AG04450 (cell line): ENCODE measurements at regions of chr2 and their contacts with region 1.

Region 1: GRCh38 chr2:24334245-24334633 is 26.1 kb downstream of the ITSN2 start:
- DNase-seq: no peak
- H3K4me3 ChIP-seq: no peak overlapping the region
- H3K27ac ChIP-seq: no peak overlapping the region
- H3K27me3 ChIP-seq: no peaks in the 10 kb centered on the region
- CTCF ChIP-seq: no peak

Region 2: DNA sequence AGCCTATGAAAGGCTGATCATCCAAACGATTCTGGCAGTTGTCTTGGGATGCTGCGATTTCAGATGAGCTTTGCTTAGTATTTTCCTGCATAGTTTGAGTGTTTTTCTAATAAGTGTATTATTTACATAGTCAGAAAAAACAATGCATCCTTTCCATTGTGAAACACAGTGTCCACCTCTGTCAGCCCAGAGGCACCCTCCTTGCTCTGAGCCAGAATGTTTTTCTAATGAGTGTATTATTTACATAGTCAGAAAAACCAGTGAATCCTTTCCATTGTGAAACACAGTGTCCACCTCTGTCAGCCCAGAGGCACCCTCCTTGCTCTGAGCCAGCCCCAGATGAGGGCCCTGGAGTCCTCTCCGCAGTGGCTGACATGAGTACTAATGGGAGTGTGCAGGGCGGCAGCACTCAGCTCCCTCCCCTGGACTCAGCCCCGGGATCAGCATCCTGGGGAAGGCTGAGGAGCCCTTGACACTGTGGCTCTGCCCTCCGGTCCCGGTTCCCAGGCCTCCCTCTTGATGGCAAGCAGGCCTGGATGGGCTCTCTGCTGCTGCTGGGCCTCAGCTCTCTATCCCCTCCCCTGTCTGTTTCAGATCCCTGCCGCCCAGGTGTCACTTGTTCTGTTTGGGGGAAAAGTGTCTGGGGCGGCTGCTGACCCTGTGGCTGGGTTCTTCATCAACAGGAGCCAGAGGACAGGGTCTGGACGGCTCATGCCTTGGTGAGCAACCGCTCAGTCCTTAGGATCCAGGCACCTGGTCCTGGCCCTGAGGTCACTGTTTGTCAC is 318.5 kb before region 1 on chr2:
- CTCF ChIA-PET with region 1: no interaction called
- POLR2A ChIA-PET with region 1: interaction called, 12 read pairs
- DNase-seq: peak; percentile 47
- H3K4me3 ChIP-seq: no peak overlapping the region
- H3K27ac ChIP-seq: peak overlapping the region; percentile 87
- H3K27me3 ChIP-seq: no peaks in the 10 kb centered on the region
- CTCF ChIP-seq: no peak